ENCODE measurements at regions of chr1 and their contacts with region 1.

Region 1: GRCh38 chr1:220776720-220777326 is 9.9 kb upstream of the MTARC1 start:
- DNase-seq: peak; percentile 80
- ATAC-seq: peak; percentile 92
- H3K4me3 ChIP-seq: no peak overlapping the region
- H3K4me3 Mint-ChIP-seq: no peak overlapping the region
- H3K27ac ChIP-seq: no peak overlapping the region
- H3K27ac Mint-ChIP-seq: no peak overlapping the region
- H3K4me1 ChIP-seq: no peaks in the 10 kb centered on the region
- H3K4me1 Mint-ChIP-seq: peaks cover 24% of the 10 kb centered on the region
- H3K27me3 ChIP-seq: peaks cover 0 to 2% (median 0%) of the 10 kb centered on the region in 4 experiments
- H3K27me3 Mint-ChIP-seq: no peaks in the 10 kb centered on the region
- CTCF ChIP-seq: peak; percentile 98

Region 2: GRCh38 chr1:220113136-220113695 is 663.6 kb before region 1 on chr1:
- CTCF ChIA-PET with region 1: interaction called, 3 read pairs
- POLR2A ChIA-PET with region 1: no interaction called
- intact Hi-C with region 1: loop called (anchors 10 kb)
- DNase-seq: peak; percentile 58
- ATAC-seq: peak; percentile 43
- H3K4me3 ChIP-seq: no peak overlapping the region
- H3K4me3 Mint-ChIP-seq: peak overlapping the region; percentile 3
- H3K27ac ChIP-seq: no peak overlapping the region
- H3K27ac Mint-ChIP-seq: no peak overlapping the region
- H3K4me1 ChIP-seq: no peaks in the 10 kb centered on the region
- H3K4me1 Mint-ChIP-seq: peaks cover 6% of the 10 kb centered on the region
- H3K27me3 ChIP-seq: no peaks in the 10 kb centered on the region
- H3K27me3 Mint-ChIP-seq: no peaks in the 10 kb centered on the region
- CTCF ChIP-seq: peak; percentile 79

Region 3: GRCh38 chr1:220294846-220295301 is 481.9 kb before region 1 on chr1:
- CTCF ChIA-PET with region 1: interaction called, 19 read pairs
- POLR2A ChIA-PET with region 1: no interaction called
- intact Hi-C with region 1: no loop called
- DNase-seq: no peak
- ATAC-seq: no peak
- H3K4me3 ChIP-seq: no peak overlapping the region
- H3K4me3 Mint-ChIP-seq: no peak overlapping the region
- H3K27ac ChIP-seq: no peak overlapping the region
- H3K27ac Mint-ChIP-seq: no peak overlapping the region
- H3K4me1 ChIP-seq: no peaks in the 10 kb centered on the region
- H3K4me1 Mint-ChIP-seq: no peaks in the 10 kb centered on the region
- H3K27me3 ChIP-seq: peaks cover 0 to 12% (median 1%) of the 10 kb centered on the region in 4 experiments
- H3K27me3 Mint-ChIP-seq: peaks cover 12% of the 10 kb centered on the region
- CTCF ChIP-seq: no peak

Region 4: GRCh38 chr1:220680085-220680687 is 96.6 kb before region 1 on chr1:
- CTCF ChIA-PET with region 1: interaction called, 65 read pairs
- POLR2A ChIA-PET with region 1: interaction called, 9 read pairs
- intact Hi-C with region 1: loop called (anchors 1 kb)
- DNase-seq: peak; percentile 59
- ATAC-seq: peak; percentile 87
- H3K4me3 ChIP-seq: no peak overlapping the region
- H3K4me3 Mint-ChIP-seq: no peak overlapping the region
- H3K27ac ChIP-seq: no peak overlapping the region
- H3K27ac Mint-ChIP-seq: no peak overlapping the region
- H3K4me1 ChIP-seq: peaks cover 0 to 3% of the 10 kb centered on the region in 2 donors
- H3K4me1 Mint-ChIP-seq: peaks cover 3% of the 10 kb centered on the region
- H3K27me3 ChIP-seq: no peaks in the 10 kb centered on the region
- H3K27me3 Mint-ChIP-seq: peaks cover 3% of the 10 kb centered on the region
- CTCF ChIP-seq: peak; percentile 85

Region 5: DNA sequence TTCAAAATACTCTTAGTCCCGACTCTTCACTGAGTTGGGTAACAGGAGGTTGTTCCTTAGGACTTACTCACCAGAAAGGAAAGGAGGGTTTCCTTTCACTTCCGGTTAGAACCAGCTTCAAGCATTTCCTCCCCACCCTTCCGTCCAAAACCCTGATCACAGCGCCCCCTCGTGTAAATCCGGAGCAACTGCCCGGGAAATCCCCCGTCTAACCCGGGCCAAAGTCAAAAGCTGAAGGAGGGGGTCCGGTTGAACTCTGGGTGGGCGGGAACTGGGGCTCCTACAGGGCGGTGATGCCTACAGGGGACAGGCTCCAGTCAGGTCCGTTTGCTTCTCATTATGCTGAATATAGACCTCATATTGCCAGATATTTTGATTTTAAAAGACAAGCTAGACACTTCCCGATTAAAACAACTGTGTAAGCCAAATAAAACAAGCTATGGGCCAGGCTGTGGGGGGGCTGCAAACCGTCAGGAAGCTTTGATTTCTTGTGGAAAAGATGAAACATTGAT is 43.7 kb before region 1 on chr1:
- CTCF ChIA-PET with region 1: interaction called, 30 read pairs
- POLR2A ChIA-PET with region 1: no interaction called
- intact Hi-C with region 1: loop called (anchors 1 kb)
- DNase-seq: peak; percentile 85
- ATAC-seq: peak; percentile 97
- H3K4me3 ChIP-seq: peak overlapping the region in 2 of 5 experiments; percentile 11 to 26
- H3K4me3 Mint-ChIP-seq: peak overlapping the region; percentile 57
- H3K27ac ChIP-seq: no peak overlapping the region
- H3K27ac Mint-ChIP-seq: peak overlapping the region; percentile 72
- H3K4me1 ChIP-seq: peaks cover 11% of the 10 kb centered on the region in 2 donors
- H3K4me1 Mint-ChIP-seq: peaks cover 23% of the 10 kb centered on the region
- H3K27me3 ChIP-seq: no peaks in the 10 kb centered on the region
- H3K27me3 Mint-ChIP-seq: no peaks in the 10 kb centered on the region
- CTCF ChIP-seq: peak; percentile 87

Region 6: GRCh38 chr1:220761688-220762427 is 15.0 kb before region 1 on chr1:
- CTCF ChIA-PET with region 1: interaction called, 54 read pairs
- POLR2A ChIA-PET with region 1: no interaction called
- intact Hi-C with region 1: no loop called
- DNase-seq: no peak
- ATAC-seq: no peak
- H3K4me3 ChIP-seq: no peak overlapping the region
- H3K4me3 Mint-ChIP-seq: no peak overlapping the region
- H3K27ac ChIP-seq: no peak overlapping the region
- H3K27ac Mint-ChIP-seq: no peak overlapping the region
- H3K4me1 ChIP-seq: no peaks in the 10 kb centered on the region
- H3K4me1 Mint-ChIP-seq: no peaks in the 10 kb centered on the region
- H3K27me3 ChIP-seq: no peaks in the 10 kb centered on the region
- H3K27me3 Mint-ChIP-seq: no peaks in the 10 kb centered on the region
- CTCF ChIP-seq: no peak